GM12878 (cell line): ENCODE measurements at regions of chr14 and their contacts with region 1.

Region 1: GRCh38 chr14:99793213-99794150 is at the start of gene EML1:
- DNase-seq: no peak
- ATAC-seq: peak; percentile 89
- H3K4me3 ChIP-seq: peak within 1 kb of the TSS; percentile 40; the same call in 1 of the 2 replicates
- H3K27ac ChIP-seq: no peak within 1 kb of the TSS
- H3K4me1 ChIP-seq: no peaks in the 10 kb centered on the region; the same call in 1 of the 2 replicates
- H3K27me3 ChIP-seq: peaks cover 0 to 23% of the 10 kb centered on the region in 2 experiments; a peak in 3 of 4 replicates
- CTCF ChIP-seq: 0 out of 6 replicates have a peak, but pooled peaks of 1 of the 3 experiments have one; percentile 0
- EP300 ChIP-seq: no peak
- POLR2A ChIP-seq: no peak
- RAD21 ChIP-seq: no peak
- polyA plus RNA-seq, gene EML1: 0.05 to 0.16 TPM

Region 2: DNA sequence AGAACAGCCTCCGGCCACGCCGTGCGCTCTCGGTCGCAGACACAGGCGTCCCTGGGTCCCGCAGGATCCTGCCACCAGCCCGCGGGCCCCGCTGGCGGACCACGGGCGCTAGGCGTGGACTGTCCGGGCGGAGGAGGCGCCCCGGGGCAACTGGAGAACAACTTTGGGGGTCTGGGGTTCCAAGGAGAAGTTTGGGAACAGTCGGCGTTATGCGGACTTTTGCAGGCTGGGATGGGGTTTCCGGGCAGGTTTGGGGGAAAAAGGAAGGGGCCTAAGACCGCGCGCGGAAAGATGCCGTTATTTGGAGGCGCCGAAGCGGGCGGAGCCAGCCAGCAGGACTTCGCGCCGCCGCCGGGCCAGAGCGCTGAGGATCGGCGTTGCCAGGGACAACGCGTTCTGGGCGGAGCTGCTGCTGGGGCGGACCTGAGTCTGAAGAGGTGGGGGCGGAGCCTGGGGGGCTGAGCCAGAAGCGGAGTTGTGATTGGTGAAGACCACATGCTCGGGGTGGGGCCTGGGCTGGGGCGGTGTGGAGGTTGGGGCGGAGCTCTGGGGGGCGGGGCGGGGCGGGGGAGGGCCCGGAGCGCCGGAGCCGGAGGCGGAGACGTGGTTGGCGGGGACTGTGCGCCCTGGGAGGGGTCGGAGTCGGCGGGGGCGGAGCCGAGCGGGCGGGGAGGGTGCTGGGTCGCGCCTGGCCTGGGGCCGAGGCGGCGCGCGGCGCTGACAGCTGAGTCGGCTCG is 109.7 kb before region 1 on chr14 and contains the start of gene CYP46A1:
- CTCF ChIA-PET with region 1: interaction called, 5 read pairs
- POLR2A ChIA-PET with region 1: no interaction called
- RAD21 ChIA-PET with region 1: interaction called, 3 read pairs
- SMC1A ChIA-PET with region 1: no interaction called
- in situ Hi-C with region 1: no loop called
- intact Hi-C with region 1: loop called (anchors 2 kb)
- DNase-seq: peak; percentile 89
- ATAC-seq: peak; percentile 95
- H3K4me3 ChIP-seq: peak within 1 kb of the TSS; percentile 99
- H3K27ac ChIP-seq: peak within 1 kb of the TSS; percentile 70
- H3K4me1 ChIP-seq: peaks cover 4% of the 10 kb centered on the region
- H3K27me3 ChIP-seq: peaks cover 0 to 2% of the 10 kb centered on the region in 2 experiments; a peak in 2 of 4 replicates
- CTCF ChIP-seq: no peak
- EP300 ChIP-seq: no peak
- POLR2A ChIP-seq: peak; percentile 68
- RAD21 ChIP-seq: no peak
- polyA plus RNA-seq, gene CYP46A1: not detected

Region 3: DNA sequence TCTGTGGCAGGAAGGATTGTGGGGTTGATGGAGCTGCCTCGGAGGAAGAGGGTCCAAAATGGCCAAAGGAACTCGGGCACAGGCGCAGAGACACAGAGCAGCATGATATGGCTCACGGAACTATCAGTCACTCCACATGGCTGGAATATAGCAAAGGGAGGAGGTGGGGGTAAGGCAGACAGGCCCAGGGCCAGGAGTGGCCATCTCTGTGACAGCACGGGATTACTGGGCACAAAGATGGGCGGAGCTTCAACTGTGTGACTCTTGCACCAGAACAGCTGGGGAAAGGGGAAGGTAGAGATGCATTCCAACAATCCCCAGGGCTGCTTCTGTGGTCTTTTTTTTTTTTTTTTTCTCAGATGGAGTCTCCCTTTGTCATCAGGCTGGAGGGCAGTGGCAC is 25.1 kb before region 1 on chr14:
- CTCF ChIA-PET with region 1: no interaction called
- POLR2A ChIA-PET with region 1: no interaction called
- RAD21 ChIA-PET with region 1: no interaction called
- SMC1A ChIA-PET with region 1: no interaction called
- in situ Hi-C with region 1: no loop called
- intact Hi-C with region 1: no loop called
- DNase-seq: no peak
- ATAC-seq: no peak
- H3K4me3 ChIP-seq: no peak overlapping the region
- H3K27ac ChIP-seq: no peak overlapping the region
- H3K4me1 ChIP-seq: no peaks in the 10 kb centered on the region
- H3K27me3 ChIP-seq: peaks cover 0 to 3% of the 10 kb centered on the region in 2 experiments; a peak in 2 of 4 replicates
- CTCF ChIP-seq: no peak
- EP300 ChIP-seq: no peak
- POLR2A ChIP-seq: no peak
- RAD21 ChIP-seq: no peak

Region 4: GRCh38 chr14:99853206-99853605 is 59.7 kb after region 1 on chr14:
- CTCF ChIA-PET with region 1: no interaction called
- POLR2A ChIA-PET with region 1: no interaction called
- RAD21 ChIA-PET with region 1: no interaction called
- SMC1A ChIA-PET with region 1: no interaction called
- in situ Hi-C with region 1: no loop called
- intact Hi-C with region 1: no loop called
- DNase-seq: no peak
- ATAC-seq: peak; percentile 30; the same call in 2 of the 3 replicates
- H3K4me3 ChIP-seq: no peak overlapping the region
- H3K27ac ChIP-seq: no peak overlapping the region
- H3K4me1 ChIP-seq: no peaks in the 10 kb centered on the region
- H3K27me3 ChIP-seq: no peaks in the 10 kb centered on the region; a peak in 1 of 4 replicates
- CTCF ChIP-seq: no peak
- EP300 ChIP-seq: no peak
- POLR2A ChIP-seq: no peak
- RAD21 ChIP-seq: no peak